PC-9 (cell line): ENCODE measurements at regions of chr1 and their contacts with region 1.

Region 1: GRCh38 chr1:25572708-25573600 is 29.5 kb downstream of the LDLRAP1 start:
- DNase-seq: peak in 1 of 2 experiments; percentile 60
- H3K4me3 ChIP-seq: no peak overlapping the region
- H3K27ac ChIP-seq: peak overlapping the region; percentile 55
- H3K4me1 ChIP-seq: peaks cover 55% of the 10 kb centered on the region
- H3K27me3 ChIP-seq: no peaks in the 10 kb centered on the region
- CTCF ChIP-seq: peak; percentile 69

Region 2: DNA sequence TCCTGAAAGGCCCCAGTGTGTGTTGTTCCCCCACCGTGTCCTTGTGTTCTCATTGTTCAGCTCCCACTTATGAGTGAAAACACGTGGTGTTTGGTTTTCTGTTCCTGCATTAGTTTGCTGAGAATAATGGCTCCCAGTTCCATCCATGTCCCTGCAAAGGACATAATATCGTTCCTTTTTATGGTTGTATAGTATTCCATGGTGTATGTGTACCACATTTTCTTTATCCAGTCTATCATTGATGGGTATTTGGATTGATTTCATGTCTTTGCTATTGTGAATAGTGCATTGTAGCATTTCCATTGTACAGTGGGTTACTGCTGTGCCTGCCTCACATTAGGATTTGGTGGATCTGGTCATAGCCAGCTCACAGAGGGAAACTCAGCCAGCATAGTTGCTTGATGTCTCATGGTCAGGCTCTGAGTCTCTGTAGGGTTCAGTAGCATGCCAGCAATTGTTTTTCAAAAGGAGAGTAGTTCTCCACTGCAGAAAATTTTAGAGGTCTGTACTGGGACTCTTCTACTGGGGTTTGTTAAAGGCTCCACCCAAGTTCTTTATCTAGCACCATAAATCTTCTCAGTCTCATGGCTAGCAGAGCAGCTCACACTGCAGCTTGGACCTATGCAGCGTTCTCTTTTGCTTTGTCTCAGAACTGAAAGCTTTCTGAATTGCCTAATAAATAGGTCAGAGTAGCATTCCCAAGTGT is 683.8 kb before region 1 on chr1:
- CTCF ChIA-PET with region 1: no interaction called
- POLR2A ChIA-PET with region 1: no interaction called
- intact Hi-C with region 1: no loop called
- DNase-seq: no peak
- H3K4me3 ChIP-seq: no peak overlapping the region
- H3K27ac ChIP-seq: no peak overlapping the region
- H3K4me1 ChIP-seq: no peaks in the 10 kb centered on the region
- H3K27me3 ChIP-seq: no peaks in the 10 kb centered on the region
- CTCF ChIP-seq: no peak

Region 3: DNA sequence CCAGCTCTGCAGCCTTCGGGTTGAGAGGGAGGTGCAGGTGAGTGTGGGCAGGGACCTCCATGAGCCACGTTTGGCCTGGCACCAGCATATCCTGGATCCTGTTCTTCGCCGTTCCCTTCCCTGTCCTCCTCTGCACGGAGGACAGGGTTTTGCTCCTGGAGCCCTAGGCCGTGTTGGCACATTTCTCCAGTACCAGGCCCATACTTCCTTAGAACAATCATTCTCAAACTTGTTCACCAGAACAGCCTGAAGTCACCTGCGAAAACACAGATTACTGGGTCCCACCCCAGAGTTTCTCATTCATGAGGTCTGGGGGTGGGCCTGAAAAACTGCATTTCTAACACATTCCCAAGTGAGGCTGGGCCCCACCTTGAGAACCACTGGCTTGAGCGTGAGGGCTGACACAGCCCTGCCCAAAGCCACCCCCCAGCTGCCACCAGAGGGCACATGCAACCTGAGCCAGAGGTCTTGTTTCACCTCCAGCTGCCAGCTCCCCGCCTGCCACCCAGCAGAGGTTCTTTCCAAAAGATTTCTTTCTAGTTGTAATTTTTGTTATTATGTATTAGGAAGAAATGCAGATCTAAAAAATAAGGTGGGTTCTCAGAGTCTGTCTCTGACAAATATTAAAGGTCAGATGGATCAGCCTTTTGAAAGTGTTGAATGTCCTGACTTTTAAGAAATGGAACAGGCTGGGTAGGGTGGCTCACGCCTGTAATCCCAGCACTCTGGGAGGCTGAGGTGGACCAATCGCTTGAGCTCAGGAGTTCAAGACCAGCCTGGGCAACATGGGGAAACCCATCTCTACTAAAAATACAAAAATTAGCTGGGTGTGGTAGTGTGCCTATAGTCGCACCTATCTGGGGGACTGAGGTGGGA is 69.2 kb before region 1 on chr1:
- CTCF ChIA-PET with region 1: no interaction called
- POLR2A ChIA-PET with region 1: no interaction called
- intact Hi-C with region 1: loop called (anchors 2 kb)
- DNase-seq: peak; percentile 53 to 76
- H3K4me3 ChIP-seq: no peak overlapping the region
- H3K27ac ChIP-seq: no peak overlapping the region
- H3K4me1 ChIP-seq: peaks cover 21% of the 10 kb centered on the region
- H3K27me3 ChIP-seq: no peaks in the 10 kb centered on the region
- CTCF ChIP-seq: peak; percentile 66

Region 4: GRCh38 chr1:25529518-25530185 is 43.3 kb before region 1 on chr1:
- CTCF ChIA-PET with region 1: no interaction called
- POLR2A ChIA-PET with region 1: no interaction called
- intact Hi-C with region 1: loop called (anchors 5 kb)
- DNase-seq: no peak
- H3K4me3 ChIP-seq: no peak overlapping the region
- H3K27ac ChIP-seq: no peak overlapping the region
- H3K4me1 ChIP-seq: no peaks in the 10 kb centered on the region
- H3K27me3 ChIP-seq: no peaks in the 10 kb centered on the region
- CTCF ChIP-seq: no peak

Region 5: GRCh38 chr1:25549273-25550154 is 23.4 kb before region 1 on chr1:
- CTCF ChIA-PET with region 1: no interaction called
- POLR2A ChIA-PET with region 1: interaction called, 5 read pairs
- intact Hi-C with region 1: loop called (anchors 2 kb)
- DNase-seq: peak; percentile 74 to 84
- H3K4me3 ChIP-seq: no peak overlapping the region
- H3K27ac ChIP-seq: peak overlapping the region; percentile 59
- H3K4me1 ChIP-seq: peaks cover 40% of the 10 kb centered on the region
- H3K27me3 ChIP-seq: no peaks in the 10 kb centered on the region
- CTCF ChIP-seq: no peak

Region 6: DNA sequence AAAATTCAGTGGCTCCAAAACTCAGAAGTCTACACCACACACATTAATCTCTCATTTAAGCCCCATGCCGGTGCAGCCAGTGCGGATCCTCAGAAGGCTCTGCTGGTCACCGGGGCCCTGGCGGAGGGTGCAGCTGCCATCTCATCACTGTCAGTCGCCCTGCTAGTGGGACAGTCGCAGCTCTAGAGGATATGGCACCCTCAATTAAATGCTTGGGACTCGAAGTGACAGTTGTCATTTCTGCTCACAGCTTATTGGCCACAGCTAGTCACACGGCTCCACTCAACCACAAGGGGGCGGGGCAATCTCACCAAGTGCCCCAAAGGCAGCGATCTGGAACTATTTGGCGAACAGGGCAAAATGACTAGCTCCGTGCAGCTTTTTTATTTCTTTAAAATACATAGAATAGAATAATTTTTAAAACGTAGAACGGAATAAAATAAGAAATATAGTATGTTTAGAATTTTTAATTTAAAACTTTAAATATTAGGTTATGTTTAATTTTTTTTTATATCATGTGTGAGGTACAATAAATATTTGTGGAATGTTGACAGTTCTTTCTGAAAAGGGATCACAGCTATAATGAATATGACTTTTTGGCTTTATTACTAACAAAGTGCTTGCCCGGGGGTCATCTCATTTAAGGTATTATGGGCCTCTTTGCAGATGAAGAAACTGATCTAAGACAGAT is 35.7 kb after region 1 on chr1:
- CTCF ChIA-PET with region 1: no interaction called
- POLR2A ChIA-PET with region 1: interaction called, 3 read pairs
- intact Hi-C with region 1: loop called (anchors 5 kb)
- DNase-seq: peak; percentile 43 to 69
- H3K4me3 ChIP-seq: no peak overlapping the region
- H3K27ac ChIP-seq: no peak overlapping the region
- H3K4me1 ChIP-seq: peaks cover 5% of the 10 kb centered on the region; the same call in 1 of the 2 replicates
- H3K27me3 ChIP-seq: no peaks in the 10 kb centered on the region
- CTCF ChIP-seq: peak; percentile 63

Region 7: GRCh38 chr1:25707280-25708016 is 134.5 kb after region 1 on chr1:
- CTCF ChIA-PET with region 1: no interaction called
- POLR2A ChIA-PET with region 1: no interaction called
- intact Hi-C with region 1: loop called (anchors 5 kb)
- DNase-seq: peak; percentile 27 to 80
- H3K4me3 ChIP-seq: peak overlapping the region; percentile 29; the same call in 1 of the 2 replicates
- H3K27ac ChIP-seq: peak overlapping the region; percentile 88
- H3K4me1 ChIP-seq: peaks cover 32% of the 10 kb centered on the region
- H3K27me3 ChIP-seq: no peaks in the 10 kb centered on the region
- CTCF ChIP-seq: no peak

Region 8: DNA sequence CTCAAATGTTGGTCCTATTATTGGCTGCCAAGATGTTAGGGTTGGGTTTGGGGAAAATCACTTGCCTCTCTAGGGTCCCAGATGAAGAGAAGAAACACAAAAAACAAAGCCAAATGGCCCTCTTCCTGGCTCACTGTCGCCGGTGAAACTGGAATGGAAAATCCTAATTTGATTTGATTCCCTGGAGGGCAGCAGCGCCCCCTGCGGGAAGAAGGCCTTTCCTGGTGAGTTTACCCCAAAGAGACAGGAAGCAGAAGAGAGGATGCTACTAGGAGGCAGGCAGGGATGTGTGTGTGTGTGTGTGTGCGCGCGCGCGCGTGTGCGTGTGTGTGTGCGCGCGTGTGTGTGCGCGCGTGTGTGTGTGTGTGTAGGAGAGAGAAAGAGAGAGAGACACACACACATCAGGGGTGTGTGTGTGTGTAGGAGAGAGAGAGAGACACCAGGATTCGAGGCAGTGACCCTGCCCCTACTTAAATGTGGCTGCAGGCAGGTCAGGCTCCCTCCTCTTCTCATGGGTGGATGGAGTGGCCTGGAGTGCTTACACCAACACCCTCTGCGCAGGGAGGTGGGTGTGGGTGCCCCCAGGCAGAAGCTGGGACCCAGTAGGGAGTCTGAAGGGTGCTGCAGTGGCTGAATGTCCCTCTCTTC is 224.0 kb after region 1 on chr1:
- CTCF ChIA-PET with region 1: no interaction called
- POLR2A ChIA-PET with region 1: no interaction called
- intact Hi-C with region 1: loop called (anchors 2 kb)
- DNase-seq: peak in 1 of 2 experiments; percentile 75
- H3K4me3 ChIP-seq: no peak overlapping the region
- H3K27ac ChIP-seq: no peak overlapping the region
- H3K4me1 ChIP-seq: no peaks in the 10 kb centered on the region
- H3K27me3 ChIP-seq: no peaks in the 10 kb centered on the region
- CTCF ChIP-seq: peak; percentile 77